Right ventricle myocardium superior (tissue), 1 donor: ENCODE measurements at regions of chr1 and their contacts with region 1.

Region 1: GRCh38 chr1:156385534-156386031 is 16.6 kb downstream of the RHBG start:
- DNase-seq: peak; percentile 53
- ATAC-seq: peak; percentile 75

Region 2: GRCh38 chr1:156445789-156446263 is 60.2 kb after region 1 on chr1:
- intact Hi-C with region 1: loop called (anchors 2 kb)
- DNase-seq: peak; percentile 88
- ATAC-seq: peak; percentile 96

Region 3: GRCh38 chr1:156608036-156608674 is 222.6 kb after region 1 on chr1:
- intact Hi-C with region 1: loop called (anchors 5 kb)
- DNase-seq: no peak
- ATAC-seq: peak; percentile 97

Region 4: DNA sequence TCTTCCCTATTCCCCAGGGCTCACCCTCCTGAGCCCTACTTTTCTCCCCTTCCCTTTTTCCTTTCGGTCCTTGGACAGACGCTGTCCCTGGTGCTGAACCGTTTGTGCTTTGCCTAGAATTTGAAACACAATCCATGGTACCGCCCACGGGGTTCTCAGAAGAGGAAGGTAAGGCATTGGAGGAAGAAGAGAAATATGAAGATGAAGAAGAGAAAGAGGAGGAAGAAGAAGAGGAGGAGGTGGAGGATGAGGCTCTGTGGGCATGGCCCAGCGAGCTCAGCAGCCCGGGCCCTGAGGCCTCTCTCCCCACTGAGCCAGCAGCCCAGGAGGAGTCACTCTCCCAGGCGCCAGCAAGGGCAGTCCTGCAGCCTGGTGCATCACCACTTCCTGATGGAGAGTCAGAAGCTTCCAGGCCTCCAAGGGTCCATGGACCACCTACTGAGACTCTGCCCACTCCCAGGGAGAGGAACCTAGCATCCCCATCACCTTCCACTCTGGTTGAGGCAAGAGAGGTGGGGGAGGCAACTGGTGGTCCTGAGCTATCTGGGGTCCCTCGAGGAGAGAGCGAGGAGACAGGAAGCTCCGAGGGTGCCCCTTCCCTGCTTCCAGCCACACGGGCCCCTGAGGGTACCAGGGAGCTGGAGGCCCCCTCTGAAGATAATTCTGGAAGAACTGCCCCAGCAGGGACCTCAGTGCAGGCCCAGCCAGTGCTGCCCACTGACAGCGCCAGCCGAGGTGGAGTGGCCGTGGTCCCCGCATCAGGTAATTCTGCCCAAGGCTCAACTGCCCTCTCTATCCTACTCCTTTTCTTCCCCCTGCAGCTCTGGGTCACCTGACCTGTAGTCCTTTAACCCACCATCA is 266.8 kb after region 1 on chr1:
- intact Hi-C with region 1: loop called (anchors 5 kb)
- DNase-seq: no peak
- ATAC-seq: no peak